Activated naive CD4-positive, alpha-beta T cell treated with anti-CD3 and anti-CD28 coated beads, Interleukin-2, amount 10 ng/mL, durations not matched to agents 7 days and 5 days (primary cell): ENCODE measurements at regions of chr15 and their contacts with region 1.

Region 1: GRCh38 chr15:89057504-89058133 is 30.6 kb upstream of the ABHD2 start:
- DNase-seq: peak; percentile 87
- H3K4me3 Mint-ChIP-seq: no peak overlapping the region
- H3K27ac Mint-ChIP-seq: no peak overlapping the region
- H3K4me1 Mint-ChIP-seq: peaks cover 7% of the 10 kb centered on the region
- H3K27me3 Mint-ChIP-seq: peaks cover 24% of the 10 kb centered on the region

Region 2: GRCh38 chr15:89068325-89068784 is 10.7 kb after region 1 on chr15:
- CTCF ChIA-PET with region 1: interaction called, 17 read pairs
- DNase-seq: peak; percentile 34
- H3K4me3 Mint-ChIP-seq: no peak overlapping the region
- H3K27ac Mint-ChIP-seq: peak overlapping the region; percentile 43
- H3K4me1 Mint-ChIP-seq: peaks cover 10% of the 10 kb centered on the region
- H3K27me3 Mint-ChIP-seq: no peaks in the 10 kb centered on the region

Region 3: GRCh38 chr15:89129123-89129815 is 71.7 kb after region 1 on chr15:
- CTCF ChIA-PET with region 1: interaction called, 101 read pairs
- DNase-seq: peak; percentile 71
- H3K4me3 Mint-ChIP-seq: no peak overlapping the region
- H3K27ac Mint-ChIP-seq: no peak overlapping the region
- H3K4me1 Mint-ChIP-seq: peaks cover 12% of the 10 kb centered on the region
- H3K27me3 Mint-ChIP-seq: no peaks in the 10 kb centered on the region

Region 4: DNA sequence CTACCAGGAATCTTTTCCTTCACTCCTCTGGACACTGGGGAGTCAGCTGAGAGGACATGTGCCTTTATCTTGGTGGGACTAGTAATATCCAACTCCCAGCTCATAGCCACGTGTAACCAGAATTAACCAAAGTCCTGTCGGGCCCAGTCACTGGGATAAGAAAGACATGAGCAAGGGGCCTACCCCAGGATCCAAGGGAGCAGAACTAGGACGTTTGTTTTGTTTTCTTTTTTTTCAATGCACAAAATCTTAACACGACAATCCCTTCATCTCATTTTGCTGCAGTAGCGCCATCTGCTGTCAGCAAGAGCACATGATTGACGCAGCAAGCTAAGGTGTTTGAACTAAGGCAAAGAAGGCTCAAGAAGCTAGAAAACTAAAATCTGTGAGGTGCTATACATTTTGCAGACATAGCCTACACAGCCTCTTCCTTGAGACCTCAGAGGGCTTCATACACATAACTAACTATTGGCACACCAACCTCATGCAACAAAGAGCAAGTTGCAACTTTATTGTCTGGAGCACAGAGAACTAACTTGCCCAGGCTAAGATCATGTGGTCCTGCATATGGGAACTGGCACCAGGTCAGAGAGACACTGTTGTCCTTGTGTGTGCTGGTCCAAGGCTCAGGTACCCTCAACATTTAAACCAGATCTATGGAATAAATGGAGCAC is 120.2 kb after region 1 on chr15:
- CTCF ChIA-PET with region 1: interaction called, 147 read pairs
- DNase-seq: peak; percentile 82
- H3K4me3 Mint-ChIP-seq: no peak overlapping the region
- H3K27ac Mint-ChIP-seq: peak overlapping the region; percentile 73
- H3K4me1 Mint-ChIP-seq: peaks cover 6% of the 10 kb centered on the region
- H3K27me3 Mint-ChIP-seq: no peaks in the 10 kb centered on the region

Region 5: GRCh38 chr15:89514596-89515406 is 457.2 kb after region 1 on chr15:
- CTCF ChIA-PET with region 1: no interaction called
- DNase-seq: no peak
- H3K4me3 Mint-ChIP-seq: no peak overlapping the region
- H3K27ac Mint-ChIP-seq: no peak overlapping the region
- H3K4me1 Mint-ChIP-seq: no peaks in the 10 kb centered on the region
- H3K27me3 Mint-ChIP-seq: peaks cover 34% of the 10 kb centered on the region